OCI-LY7 (cell line): ENCODE measurements at regions of chr7 and their contacts with region 1.

Region 1: DNA sequence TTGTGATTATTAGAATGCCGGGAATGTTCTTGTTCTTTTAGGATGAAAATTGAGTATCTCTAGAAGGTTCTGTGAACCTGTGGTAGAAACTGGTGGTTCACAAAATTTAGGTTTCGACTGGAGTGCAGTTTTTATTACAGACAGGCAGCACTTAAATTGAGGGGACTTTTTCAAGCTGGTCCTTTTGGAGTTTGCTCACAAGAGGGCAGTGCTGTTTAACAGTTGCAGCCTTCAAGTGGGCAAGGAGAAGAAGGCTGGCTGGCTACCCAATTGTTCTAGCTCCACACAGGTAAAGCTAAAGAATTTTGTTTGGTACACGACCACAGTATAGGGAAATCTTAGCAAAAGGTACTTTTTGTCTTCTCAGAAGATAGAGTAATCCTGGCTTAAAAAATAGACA is 233.6 kb downstream of the SNX13 start:
- DNase-seq: peak; percentile 49
- H3K4me3 ChIP-seq: no peak overlapping the region
- H3K27ac ChIP-seq: no peak overlapping the region
- H3K4me1 ChIP-seq: no peaks in the 10 kb centered on the region
- CTCF ChIP-seq: peak; percentile 78

Region 2: GRCh38 chr7:17166824-17167379 is 539.8 kb before region 1 on chr7:
- CTCF ChIA-PET with region 1: no interaction called
- POLR2A ChIA-PET with region 1: no interaction called
- intact Hi-C with region 1: no loop called
- DNase-seq: no peak
- H3K4me3 ChIP-seq: no peak overlapping the region
- H3K27ac ChIP-seq: no peak overlapping the region
- H3K4me1 ChIP-seq: no peaks in the 10 kb centered on the region
- CTCF ChIP-seq: no peak

Region 3: GRCh38 chr7:17991866-17992648 is 285.3 kb after region 1 on chr7:
- CTCF ChIA-PET with region 1: no interaction called
- POLR2A ChIA-PET with region 1: no interaction called
- intact Hi-C with region 1: loop called (anchors 10 kb)
- DNase-seq: peak; percentile 14
- H3K4me3 ChIP-seq: no peak overlapping the region
- H3K27ac ChIP-seq: no peak overlapping the region
- H3K4me1 ChIP-seq: no peaks in the 10 kb centered on the region
- CTCF ChIP-seq: peak; percentile 70

Region 4: DNA sequence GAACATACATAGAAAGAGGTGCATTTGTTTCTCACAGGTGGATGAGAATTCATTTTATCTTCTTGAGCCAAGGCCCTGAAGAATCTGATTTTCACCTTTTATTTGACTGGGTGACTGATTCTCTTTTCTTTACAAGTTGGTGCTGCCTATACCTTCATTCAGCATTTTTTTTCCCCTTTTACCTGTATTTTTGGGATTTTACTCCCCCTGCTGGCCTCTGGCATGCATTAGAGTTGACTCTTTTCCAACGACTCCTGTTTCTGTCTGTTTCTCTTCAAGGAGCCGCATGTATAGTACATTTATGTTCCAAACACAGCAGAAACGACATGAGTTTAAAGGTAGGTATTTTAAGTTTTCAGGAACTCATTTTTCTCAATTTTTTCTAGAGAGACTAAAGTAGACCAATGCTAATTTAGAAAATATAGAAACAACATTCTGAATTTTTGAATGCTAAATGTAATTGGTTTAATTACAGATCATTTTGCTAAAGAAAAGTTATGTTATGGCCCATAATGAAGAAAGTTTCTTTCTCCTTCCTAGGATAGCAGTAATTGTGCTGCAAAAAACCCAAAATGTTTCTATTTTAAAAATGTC is 639.0 kb after region 1 on chr7:
- CTCF ChIA-PET with region 1: no interaction called
- POLR2A ChIA-PET with region 1: no interaction called
- intact Hi-C with region 1: loop called (anchors 5 kb)
- DNase-seq: peak; percentile 47
- H3K4me3 ChIP-seq: no peak overlapping the region
- H3K27ac ChIP-seq: no peak overlapping the region
- H3K4me1 ChIP-seq: no peaks in the 10 kb centered on the region
- CTCF ChIP-seq: peak; percentile 91